ENCODE measurements at regions of chr3 and their contacts with region 1.

Region 1: GRCh38 chr3:72447059-72447946 is 400.9 kb downstream of the SHQ1 start:
- DNase-seq: peak; percentile 86 to 98 (median 95)
- ATAC-seq: peak; percentile 99
- H3K4me3 ChIP-seq: peak overlapping the region; percentile 39
- H3K4me3 Mint-ChIP-seq: peak overlapping the region; percentile 47 to 98 (median 74)
- H3K27ac ChIP-seq: peak overlapping the region; percentile 79
- H3K27ac Mint-ChIP-seq: peak overlapping the region; percentile 25 to 83 (median 61)
- H3K4me1 ChIP-seq: peaks cover 23 to 31% of the 10 kb centered on the region in 2 donors
- H3K4me1 Mint-ChIP-seq: peaks cover 37 to 43% (median 41%) of the 10 kb centered on the region in 7 donors
- H3K27me3 ChIP-seq: no peaks in the 10 kb centered on the region
- H3K27me3 Mint-ChIP-seq: peaks cover 0 to 8% (median 6%) of the 10 kb centered on the region in 5 donors

Region 2: DNA sequence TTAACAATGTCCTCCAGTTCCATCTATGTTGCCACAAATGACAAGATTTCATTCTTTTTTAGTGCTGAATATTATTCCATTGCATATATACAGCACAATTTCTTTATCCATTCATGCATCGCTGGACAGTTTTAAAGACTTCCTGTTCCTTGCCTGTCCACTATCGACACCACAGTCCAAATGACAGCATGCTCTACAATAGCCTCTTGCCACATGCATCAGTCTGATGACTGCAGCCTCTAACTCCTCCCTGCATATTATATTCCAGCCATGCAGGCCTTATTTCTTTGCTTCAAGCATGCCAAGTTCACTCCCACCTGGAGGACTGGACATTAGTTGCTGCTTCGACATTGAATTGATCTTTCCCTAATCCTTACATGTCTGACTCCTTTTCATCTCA is 1170.0 kb before region 1 on chr3:
- CTCF ChIA-PET with region 1: no interaction called
- POLR2A ChIA-PET with region 1: no interaction called
- intact Hi-C with region 1: no loop called
- DNase-seq: no peak
- ATAC-seq: no peak
- H3K4me3 ChIP-seq: no peak overlapping the region
- H3K4me3 Mint-ChIP-seq: peak overlapping the region in 3 of 10 donors; percentile 42 to 69 (median 47)
- H3K27ac ChIP-seq: no peak overlapping the region
- H3K27ac Mint-ChIP-seq: peak overlapping the region in 8 of 9 donors; percentile 19 to 86 (median 69)
- H3K4me1 ChIP-seq: peaks cover 0 to 43% of the 10 kb centered on the region in 2 donors
- H3K4me1 Mint-ChIP-seq: peaks cover 0 to 91% (median 80%) of the 10 kb centered on the region in 7 donors
- H3K27me3 ChIP-seq: no peaks in the 10 kb centered on the region
- H3K27me3 Mint-ChIP-seq: no peaks in the 10 kb centered on the region

Region 3: GRCh38 chr3:72100601-72101187 is 346.6 kb before region 1 on chr3:
- CTCF ChIA-PET with region 1: no interaction called
- POLR2A ChIA-PET with region 1: interaction called, 3 read pairs
- intact Hi-C with region 1: loop called (anchors 2 kb)
- DNase-seq: peak; percentile 83 to 94 (median 90)
- ATAC-seq: peak; percentile 89
- H3K4me3 ChIP-seq: peak overlapping the region; percentile 56
- H3K4me3 Mint-ChIP-seq: peak overlapping the region; percentile 77 to 88 (median 83)
- H3K27ac ChIP-seq: peak overlapping the region; percentile 37
- H3K27ac Mint-ChIP-seq: peak overlapping the region; percentile 28 to 96 (median 83)
- H3K4me1 ChIP-seq: peaks cover 3 to 19% of the 10 kb centered on the region in 2 donors
- H3K4me1 Mint-ChIP-seq: peaks cover 24 to 38% (median 26%) of the 10 kb centered on the region in 7 donors
- H3K27me3 ChIP-seq: peaks cover 0 to 3% of the 10 kb centered on the region in 2 donors
- H3K27me3 Mint-ChIP-seq: peaks cover 0 to 7% (median 0%) of the 10 kb centered on the region in 5 donors

Region 4: DNA sequence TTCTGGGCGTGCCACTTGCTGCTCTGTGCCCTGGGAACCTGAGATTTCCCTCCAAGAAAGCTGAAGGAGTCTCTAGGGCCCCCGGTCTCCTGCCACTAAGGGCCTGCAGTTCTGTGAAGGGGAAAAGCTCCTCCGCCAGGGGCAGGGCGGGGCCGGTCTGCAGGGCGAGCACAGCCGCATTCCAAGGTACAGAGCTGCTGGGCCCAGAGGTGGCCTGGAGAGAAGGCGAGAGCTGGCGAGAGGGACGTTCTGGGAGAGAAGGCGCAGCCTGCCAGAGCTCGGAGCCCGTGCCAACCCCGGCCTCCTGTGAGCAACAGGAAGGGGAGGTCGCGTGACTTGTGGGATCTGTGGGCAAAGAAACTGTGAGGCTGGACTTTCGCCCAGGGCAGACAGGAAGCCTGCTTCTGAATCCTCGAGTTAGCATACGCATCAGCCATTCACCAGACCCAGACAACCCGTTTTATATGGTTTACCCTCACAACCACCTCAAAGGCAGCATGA is 99.4 kb before region 1 on chr3:
- CTCF ChIA-PET with region 1: no interaction called
- POLR2A ChIA-PET with region 1: interaction called, 5 read pairs
- intact Hi-C with region 1: loop called (anchors 1 to 2 kb)
- DNase-seq: peak in 5 of 9 donors; percentile 37 to 44 (median 41)
- ATAC-seq: peak; percentile 44
- H3K4me3 ChIP-seq: no peak overlapping the region
- H3K4me3 Mint-ChIP-seq: peak overlapping the region in 7 of 10 donors; percentile 11 to 71 (median 60)
- H3K27ac ChIP-seq: peak overlapping the region; percentile 22
- H3K27ac Mint-ChIP-seq: peak overlapping the region in 8 of 9 donors; percentile 70 to 90 (median 86)
- H3K4me1 ChIP-seq: peaks cover 3 to 63% of the 10 kb centered on the region in 2 donors
- H3K4me1 Mint-ChIP-seq: peaks cover 37 to 69% (median 64%) of the 10 kb centered on the region in 7 donors
- H3K27me3 ChIP-seq: no peaks in the 10 kb centered on the region
- H3K27me3 Mint-ChIP-seq: peaks cover 0 to 12% (median 0%) of the 10 kb centered on the region in 5 donors

Region 5: DNA sequence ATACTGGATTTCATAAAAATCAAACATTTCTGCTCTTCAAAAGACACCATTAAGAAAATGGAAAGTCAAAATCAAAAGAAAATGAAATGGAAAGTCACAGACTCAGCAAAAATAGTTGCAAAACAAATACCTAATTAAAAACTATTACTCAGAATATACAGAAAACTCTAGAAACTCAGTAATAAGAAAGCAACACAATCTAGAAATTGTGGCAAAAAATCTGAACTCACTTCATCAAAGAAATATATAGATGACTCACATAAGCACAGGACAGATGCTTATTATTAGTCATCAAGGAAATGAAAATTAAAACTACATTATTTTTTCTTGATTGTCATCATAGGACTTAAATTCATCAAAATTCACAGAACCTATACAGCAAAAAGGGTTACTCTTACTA is 29.1 kb before region 1 on chr3:
- CTCF ChIA-PET with region 1: no interaction called
- POLR2A ChIA-PET with region 1: no interaction called
- intact Hi-C with region 1: loop called in 1 of 2 experiments (anchors 2 kb)
- DNase-seq: no peak
- ATAC-seq: no peak
- H3K4me3 ChIP-seq: no peak overlapping the region
- H3K4me3 Mint-ChIP-seq: peak overlapping the region in 3 of 10 donors; percentile 7 to 47 (median 20)
- H3K27ac ChIP-seq: no peak overlapping the region
- H3K27ac Mint-ChIP-seq: peak overlapping the region in 1 of 9 donors; percentile 35
- H3K4me1 ChIP-seq: peaks cover 3 to 10% of the 10 kb centered on the region in 2 donors
- H3K4me1 Mint-ChIP-seq: peaks cover 37 to 89% (median 70%) of the 10 kb centered on the region in 7 donors
- H3K27me3 ChIP-seq: no peaks in the 10 kb centered on the region
- H3K27me3 Mint-ChIP-seq: no peaks in the 10 kb centered on the region

Region 6: DNA sequence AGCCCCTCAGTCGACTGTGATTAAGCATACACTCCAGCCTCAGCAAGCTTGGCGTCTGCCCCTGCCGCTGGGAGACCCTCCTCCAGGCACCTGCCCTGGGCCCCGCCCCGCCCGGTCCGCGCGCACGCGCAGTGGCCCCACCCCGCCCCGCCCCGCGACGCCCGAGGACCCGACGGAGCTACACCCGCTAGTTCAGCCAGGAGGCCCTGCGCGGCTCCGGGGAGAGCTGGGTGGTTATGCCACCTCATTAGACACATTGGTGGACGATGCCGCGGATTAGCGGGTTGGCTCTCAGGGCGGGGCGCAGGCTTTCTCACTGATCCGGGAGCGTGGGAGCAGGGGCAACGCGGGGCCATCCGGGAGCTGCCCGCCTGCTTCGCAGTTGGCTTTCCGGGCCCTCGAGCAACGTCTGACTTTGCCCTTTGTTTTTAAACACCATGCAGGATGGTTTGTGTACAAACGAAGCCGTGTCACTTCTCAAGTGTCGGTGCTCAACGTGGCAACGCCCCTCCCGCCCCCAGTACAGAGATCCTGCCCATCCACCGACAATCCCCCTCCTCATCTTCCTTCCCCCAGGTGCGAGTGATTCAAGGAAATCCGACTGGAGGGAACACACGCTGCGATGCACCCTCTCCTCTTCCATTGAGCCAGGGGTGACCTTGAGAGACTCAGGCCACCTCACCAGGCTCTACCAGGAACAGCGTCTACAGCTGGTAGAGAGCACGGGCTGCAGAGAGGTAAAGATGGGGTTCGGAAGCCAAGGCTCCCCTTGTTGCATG is 291.6 kb after region 1 on chr3:
- CTCF ChIA-PET with region 1: no interaction called
- POLR2A ChIA-PET with region 1: no interaction called
- intact Hi-C with region 1: loop called in 1 of 2 experiments (anchors 5 kb)
- DNase-seq: peak; percentile 68 to 84 (median 76)
- ATAC-seq: peak; percentile 93
- H3K4me3 ChIP-seq: peak overlapping the region; percentile 80
- H3K4me3 Mint-ChIP-seq: peak overlapping the region; percentile 81 to 96 (median 94)
- H3K27ac ChIP-seq: peak overlapping the region; percentile 81
- H3K27ac Mint-ChIP-seq: peak overlapping the region; percentile 89 to 99 (median 97)
- H3K4me1 ChIP-seq: peaks cover 4 to 21% of the 10 kb centered on the region in 2 donors
- H3K4me1 Mint-ChIP-seq: peaks cover 15 to 35% (median 32%) of the 10 kb centered on the region in 7 donors
- H3K27me3 ChIP-seq: no peaks in the 10 kb centered on the region
- H3K27me3 Mint-ChIP-seq: peaks cover 0 to 3% (median 0%) of the 10 kb centered on the region in 5 donors

Region 7: GRCh38 chr3:72847751-72848702 is 400.7 kb after region 1 on chr3 and contains the start of gene SHQ1:
- CTCF ChIA-PET with region 1: no interaction called
- POLR2A ChIA-PET with region 1: no interaction called
- intact Hi-C with region 1: loop called (anchors 2 to 5 kb)
- DNase-seq: peak; percentile 87 to 94 (median 92)
- ATAC-seq: peak; percentile 96
- H3K4me3 ChIP-seq: peak within 1 kb of the TSS; percentile 92
- H3K4me3 Mint-ChIP-seq: peak within 1 kb of the TSS; percentile 93 to 100 (median 98)
- H3K27ac ChIP-seq: peak within 1 kb of the TSS; percentile 71
- H3K27ac Mint-ChIP-seq: peak within 1 kb of the TSS; percentile 80 to 92 (median 89)
- H3K4me1 ChIP-seq: peaks cover 14 to 16% of the 10 kb centered on the region in 2 donors
- H3K4me1 Mint-ChIP-seq: peaks cover 34 to 67% (median 51%) of the 10 kb centered on the region in 7 donors
- H3K27me3 ChIP-seq: no peaks in the 10 kb centered on the region
- H3K27me3 Mint-ChIP-seq: peaks cover 0 to 7% (median 0%) of the 10 kb centered on the region in 5 donors
- total RNA-seq, gene SHQ1: 14.1 to 34.3 (median 24.5) TPM

Measured in naive thymus-derived CD4-positive, alpha-beta T cell (primary cell).